ENCODE measurements at regions of chr5 and their contacts with region 1.

Region 1: GRCh38 chr5:133944263-133945185 is 23.9 kb downstream of the C5orf15 start:
- DNase-seq: peak in 1 of 2 experiments; percentile 85
- H3K4me3 ChIP-seq: no peak overlapping the region
- H3K27ac ChIP-seq: no peak overlapping the region
- H3K4me1 ChIP-seq: no peaks in the 10 kb centered on the region
- H3K27me3 ChIP-seq: no peaks in the 10 kb centered on the region
- CTCF ChIP-seq: peak; percentile 84 to 98 (median 92)
- EP300 ChIP-seq: no peak
- POLR2A ChIP-seq: no peak
- RAD21 ChIP-seq: peak; percentile 97 to 98

Region 2: GRCh38 chr5:133902511-133903118 is 41.9 kb before region 1 on chr5:
- CTCF ChIA-PET with region 1: interaction called, 11 read pairs
- POLR2A ChIA-PET with region 1: no interaction called
- DNase-seq: no peak
- H3K4me3 ChIP-seq: no peak overlapping the region
- H3K27ac ChIP-seq: no peak overlapping the region
- H3K4me1 ChIP-seq: no peaks in the 10 kb centered on the region; a peak in 1 of 7 replicates
- H3K27me3 ChIP-seq: no peaks in the 10 kb centered on the region; a peak in 1 of 7 replicates
- CTCF ChIP-seq: no peak
- EP300 ChIP-seq: no peak
- POLR2A ChIP-seq: no peak
- RAD21 ChIP-seq: no peak

Region 3: DNA sequence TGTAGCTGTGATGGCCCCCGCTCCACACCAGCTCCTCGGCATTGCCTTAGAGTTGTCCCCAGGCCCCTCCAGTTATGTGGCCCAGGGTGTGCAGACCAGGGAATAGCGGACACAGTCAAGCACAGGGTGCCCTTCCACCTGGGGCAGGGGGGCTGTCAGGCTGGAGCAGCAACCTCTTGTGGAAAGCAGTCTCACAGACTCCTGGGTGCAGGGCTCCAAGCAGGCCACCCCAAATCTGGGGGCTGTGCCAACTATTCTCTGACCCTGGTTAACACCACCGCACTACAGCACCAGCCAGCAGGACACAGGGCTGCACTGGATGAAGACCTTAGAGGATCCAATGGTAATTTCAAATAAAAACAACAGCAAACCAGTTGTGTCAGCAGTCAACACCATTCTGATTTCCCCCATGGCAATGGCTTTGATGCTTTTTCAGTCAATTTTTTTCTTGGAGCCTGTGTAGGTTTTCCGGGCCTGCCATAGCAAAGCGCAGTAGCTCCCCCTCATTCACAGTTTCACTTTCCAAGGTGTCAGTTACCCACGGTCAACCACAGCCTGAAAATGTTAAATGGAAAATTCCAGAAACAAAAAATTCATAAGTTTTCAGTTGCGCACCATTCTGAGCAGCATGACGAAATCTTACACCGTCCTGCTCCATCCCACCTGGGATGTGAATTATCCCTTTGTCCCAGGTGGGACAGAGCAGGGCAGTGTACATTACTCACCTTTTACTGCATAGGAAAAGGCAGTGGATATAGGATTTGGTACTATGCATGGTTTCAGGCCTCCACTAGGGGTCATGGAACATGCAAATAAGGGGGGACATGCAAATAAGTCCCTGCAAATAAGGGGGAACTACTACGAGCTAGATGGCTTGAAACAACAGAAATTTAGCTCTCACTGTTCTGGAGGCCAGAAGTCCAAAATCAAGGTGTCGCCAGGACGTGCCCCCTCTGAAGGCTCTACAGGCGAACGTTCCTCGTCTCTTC is 25.1 kb before region 1 on chr5:
- CTCF ChIA-PET with region 1: interaction called, 11 read pairs
- POLR2A ChIA-PET with region 1: no interaction called
- DNase-seq: no peak
- H3K4me3 ChIP-seq: no peak overlapping the region
- H3K27ac ChIP-seq: no peak overlapping the region
- H3K4me1 ChIP-seq: no peaks in the 10 kb centered on the region; a peak in 1 of 7 replicates
- H3K27me3 ChIP-seq: no peaks in the 10 kb centered on the region
- CTCF ChIP-seq: no peak
- EP300 ChIP-seq: no peak
- POLR2A ChIP-seq: no peak
- RAD21 ChIP-seq: no peak

Measured in H1 (cell line).